ENCODE measurements at regions of chr12 and their contacts with region 1.

Region 1: GRCh38 chr12:119544765-119545625 is 48.6 kb upstream of the TMEM233 start:
- DNase-seq: peak; percentile 84
- H3K27ac ChIP-seq: no peak overlapping the region
- CTCF ChIP-seq: peak; percentile 82

Region 2: DNA sequence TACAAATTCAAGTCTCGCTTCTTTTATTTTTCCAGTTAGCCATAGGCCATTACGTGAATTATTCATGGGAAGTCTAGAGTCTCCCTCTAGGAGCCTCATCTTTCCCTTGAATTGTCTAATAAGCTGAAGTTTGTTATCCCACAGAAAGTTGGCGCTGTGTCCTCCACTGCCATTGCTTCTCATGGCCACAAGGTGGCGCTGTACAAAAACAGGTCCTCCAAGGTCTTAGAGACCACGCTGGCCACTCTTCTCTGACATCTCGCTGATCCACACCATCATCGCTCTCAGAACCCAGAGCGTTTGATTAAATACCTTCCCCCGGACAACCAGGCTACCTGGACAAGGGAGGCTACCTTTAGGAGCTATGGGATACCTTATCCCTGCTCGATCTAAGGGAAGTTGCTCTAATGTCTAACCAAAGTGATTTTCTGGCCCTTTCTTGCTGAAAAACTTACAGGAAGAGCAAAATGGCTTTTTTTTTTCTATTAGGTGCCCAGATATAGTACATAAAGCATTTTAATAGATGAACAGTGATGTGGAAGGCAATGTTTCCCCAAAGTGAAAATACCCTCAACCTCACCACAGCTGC is 100.4 kb before region 1 on chr12:
- CTCF ChIA-PET with region 1: interaction called, 19 read pairs
- POLR2A ChIA-PET with region 1: no interaction called
- DNase-seq: peak; percentile 38
- H3K27ac ChIP-seq: no peak overlapping the region
- CTCF ChIP-seq: peak; percentile 77

Region 3: GRCh38 chr12:119649202-119649808 is 104.3 kb after region 1 on chr12:
- CTCF ChIA-PET with region 1: interaction called, 10 read pairs
- POLR2A ChIA-PET with region 1: no interaction called
- DNase-seq: peak; percentile 26
- H3K27ac ChIP-seq: no peak overlapping the region
- CTCF ChIP-seq: peak; percentile 71

Measured in RWPE1 (cell line).